PC-9 (cell line): ENCODE measurements at regions of chr15 and their contacts with region 1.

Region 1: DNA sequence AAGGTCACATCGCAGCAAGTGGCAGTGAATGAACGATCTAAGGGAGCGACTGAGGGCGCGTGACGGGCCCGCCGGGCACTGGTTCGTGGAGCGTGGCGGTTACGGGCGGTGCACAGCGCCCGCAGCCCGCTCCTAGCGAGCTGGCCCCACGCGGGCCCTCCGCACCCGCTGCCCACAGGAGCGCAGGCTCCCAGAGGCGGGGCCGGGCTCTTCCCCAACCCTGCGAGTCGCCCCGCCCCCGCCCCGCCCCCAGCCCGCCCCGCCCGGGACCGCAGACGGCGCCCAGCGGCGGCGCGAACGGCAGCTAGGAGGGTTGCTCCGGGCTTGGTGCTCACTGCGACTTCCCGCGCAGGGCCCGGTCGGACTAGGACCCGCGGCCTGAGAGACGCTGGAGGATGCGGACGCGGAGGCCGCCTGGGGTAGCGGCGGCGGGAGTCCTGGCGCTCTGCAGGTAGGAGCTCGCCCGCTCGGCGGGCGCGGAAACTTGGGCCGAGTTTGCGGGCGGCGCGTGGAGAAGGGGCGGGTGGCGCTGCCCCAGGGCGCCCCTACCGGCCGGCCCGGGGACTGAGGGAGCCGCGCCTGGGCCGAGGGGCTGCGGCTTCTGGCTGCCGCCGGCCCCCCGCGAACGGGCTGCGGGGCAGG is at the start of gene C15orf39:
- DNase-seq: peak; percentile 52 to 74
- H3K4me3 ChIP-seq: peak within 1 kb of the TSS; percentile 93
- H3K27ac ChIP-seq: peak within 1 kb of the TSS; percentile 97
- H3K4me1 ChIP-seq: peaks cover 43% of the 10 kb centered on the region
- H3K27me3 ChIP-seq: no peaks in the 10 kb centered on the region
- CTCF ChIP-seq: peak; percentile 73; the same call in 1 of the 2 replicates
- total RNA-seq, gene C15orf39: 40.8 and 41.3 TPM in 2 replicates

Region 2: GRCh38 chr15:74768771-74769342 is 432.9 kb before region 1 on chr15:
- CTCF ChIA-PET with region 1: no interaction called
- POLR2A ChIA-PET with region 1: no interaction called
- intact Hi-C with region 1: loop called (anchors 1 kb)
- DNase-seq: peak in 1 of 2 experiments; percentile 52
- H3K4me3 ChIP-seq: no peak overlapping the region
- H3K27ac ChIP-seq: no peak overlapping the region
- H3K4me1 ChIP-seq: peaks cover 8% of the 10 kb centered on the region
- H3K27me3 ChIP-seq: no peaks in the 10 kb centered on the region
- CTCF ChIP-seq: peak; percentile 90

Region 3: GRCh38 chr15:75029378-75030022 is 172.2 kb before region 1 on chr15:
- CTCF ChIA-PET with region 1: interaction called, 6 read pairs
- POLR2A ChIA-PET with region 1: no interaction called
- intact Hi-C with region 1: loop called (anchors 1 kb)
- DNase-seq: peak; percentile 72 to 87
- H3K4me3 ChIP-seq: no peak overlapping the region
- H3K27ac ChIP-seq: peak overlapping the region; percentile 19; the same call in 1 of the 2 replicates
- H3K4me1 ChIP-seq: peaks cover 38% of the 10 kb centered on the region
- H3K27me3 ChIP-seq: no peaks in the 10 kb centered on the region
- CTCF ChIP-seq: peak; percentile 94

Region 4: GRCh38 chr15:75058127-75058905 is 143.4 kb before region 1 on chr15:
- CTCF ChIA-PET with region 1: interaction called, 4 read pairs
- POLR2A ChIA-PET with region 1: interaction called, 13 read pairs
- intact Hi-C with region 1: no loop called
- DNase-seq: peak; percentile 66 to 85
- H3K4me3 ChIP-seq: no peak overlapping the region
- H3K27ac ChIP-seq: peak overlapping the region; percentile 90
- H3K4me1 ChIP-seq: peaks cover 34% of the 10 kb centered on the region
- H3K27me3 ChIP-seq: no peaks in the 10 kb centered on the region
- CTCF ChIP-seq: no peak

Region 5: GRCh38 chr15:75104804-75105535 is 96.8 kb before region 1 on chr15:
- CTCF ChIA-PET with region 1: interaction called, 5 read pairs
- POLR2A ChIA-PET with region 1: interaction called, 6 read pairs
- intact Hi-C with region 1: loop called (anchors 1 kb)
- DNase-seq: peak; percentile 87 to 98
- H3K4me3 ChIP-seq: no peak overlapping the region
- H3K27ac ChIP-seq: peak overlapping the region; percentile 99
- H3K4me1 ChIP-seq: peaks cover 62% of the 10 kb centered on the region
- H3K27me3 ChIP-seq: no peaks in the 10 kb centered on the region
- CTCF ChIP-seq: no peak

Region 6: DNA sequence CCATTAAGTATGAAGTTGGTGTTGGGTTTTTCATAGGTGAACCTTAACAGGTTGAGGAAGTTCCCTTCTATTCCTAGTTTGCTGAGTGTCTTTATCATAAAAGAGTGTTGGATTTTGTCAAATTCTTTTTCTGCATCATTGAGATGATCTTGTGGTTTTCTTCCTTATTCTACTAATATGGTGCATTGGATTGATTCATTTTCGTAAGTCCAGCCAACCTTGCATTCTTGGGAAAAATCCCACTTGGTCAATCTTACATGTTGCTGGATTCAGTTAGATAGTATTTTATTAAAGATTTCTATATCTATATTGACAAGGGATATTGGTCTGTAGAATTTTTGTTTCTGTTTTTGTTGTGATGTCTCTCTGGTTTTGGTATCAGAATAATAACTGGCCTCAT is 83.7 kb before region 1 on chr15:
- CTCF ChIA-PET with region 1: no interaction called
- POLR2A ChIA-PET with region 1: no interaction called
- intact Hi-C with region 1: no loop called
- DNase-seq: no peak
- H3K4me3 ChIP-seq: no peak overlapping the region
- H3K27ac ChIP-seq: no peak overlapping the region
- H3K4me1 ChIP-seq: peaks cover 8% of the 10 kb centered on the region
- H3K27me3 ChIP-seq: no peaks in the 10 kb centered on the region
- CTCF ChIP-seq: no peak

Region 7: GRCh38 chr15:75171408-75171807 is 30.3 kb before region 1 on chr15:
- CTCF ChIA-PET with region 1: interaction called, 11 read pairs
- POLR2A ChIA-PET with region 1: interaction called, 6 read pairs
- intact Hi-C with region 1: loop called (anchors 2 kb)
- DNase-seq: peak in 1 of 2 experiments; percentile 62
- H3K4me3 ChIP-seq: no peak overlapping the region
- H3K27ac ChIP-seq: peak overlapping the region; percentile 72
- H3K4me1 ChIP-seq: peaks cover 80% of the 10 kb centered on the region
- H3K27me3 ChIP-seq: no peaks in the 10 kb centered on the region
- CTCF ChIP-seq: no peak

Region 8: GRCh38 chr15:75215107-75216004 is 13.6 kb after region 1 on chr15:
- CTCF ChIA-PET with region 1: no interaction called
- POLR2A ChIA-PET with region 1: interaction called, 10 read pairs
- intact Hi-C with region 1: no loop called
- DNase-seq: peak; percentile 64 to 67
- H3K4me3 ChIP-seq: no peak overlapping the region
- H3K27ac ChIP-seq: peak overlapping the region; percentile 25; the same call in 1 of the 2 replicates
- H3K4me1 ChIP-seq: peaks cover 15% of the 10 kb centered on the region
- H3K27me3 ChIP-seq: no peaks in the 10 kb centered on the region
- CTCF ChIP-seq: no peak

Region 9: GRCh38 chr15:75321708-75322107 is 120.0 kb after region 1 on chr15:
- CTCF ChIA-PET with region 1: no interaction called
- POLR2A ChIA-PET with region 1: no interaction called
- intact Hi-C with region 1: no loop called
- DNase-seq: no peak
- H3K4me3 ChIP-seq: no peak overlapping the region
- H3K27ac ChIP-seq: no peak overlapping the region
- H3K4me1 ChIP-seq: no peaks in the 10 kb centered on the region
- H3K27me3 ChIP-seq: no peaks in the 10 kb centered on the region
- CTCF ChIP-seq: no peak